ENCODE measurements at regions of chr3 and their contacts with region 1.

Region 1: DNA sequence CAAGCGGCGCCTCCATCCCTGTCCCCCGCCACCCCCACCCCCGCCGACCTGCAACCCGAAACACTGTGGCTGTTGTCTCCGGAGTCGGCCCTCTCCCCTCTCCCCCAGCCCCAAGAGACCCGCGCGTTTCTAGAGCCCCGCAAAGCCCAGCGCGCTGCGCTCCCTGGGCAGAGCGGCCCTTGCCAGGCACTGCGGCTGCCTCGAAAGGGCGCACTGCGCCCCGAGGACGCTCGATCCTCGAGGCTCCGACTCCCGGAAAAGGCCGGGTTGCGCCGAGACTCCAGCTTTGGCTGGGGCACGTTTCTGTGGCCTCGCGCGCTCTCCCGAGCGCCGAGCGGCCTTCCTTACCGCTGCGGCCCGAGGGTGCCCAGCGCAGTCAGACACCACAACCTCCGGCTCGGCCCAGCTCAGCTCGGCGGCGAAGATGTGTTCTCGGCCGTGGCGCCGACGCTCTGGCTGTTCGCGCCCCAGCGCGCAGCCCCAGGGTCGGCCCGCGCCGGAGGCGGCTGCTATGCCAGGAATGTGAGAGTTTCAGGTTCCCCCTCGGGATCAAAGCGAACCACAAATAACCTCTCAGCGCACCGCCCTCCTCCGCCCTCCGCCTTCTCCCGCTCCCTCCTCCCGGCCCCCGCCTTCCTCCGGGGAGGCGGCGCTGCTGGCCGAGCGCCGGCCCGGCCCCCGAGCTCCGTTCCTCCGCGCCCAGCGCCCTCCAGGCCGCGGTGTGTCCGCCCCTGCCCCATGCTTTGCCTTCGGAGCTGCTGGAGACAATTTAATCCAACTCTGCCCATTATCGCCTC is at the start of gene AMOTL2:
- DNase-seq: peak; percentile 93
- ATAC-seq: peak; percentile 82
- total RNA-seq, gene AMOTL2: 63.0 TPM

Region 2: DNA sequence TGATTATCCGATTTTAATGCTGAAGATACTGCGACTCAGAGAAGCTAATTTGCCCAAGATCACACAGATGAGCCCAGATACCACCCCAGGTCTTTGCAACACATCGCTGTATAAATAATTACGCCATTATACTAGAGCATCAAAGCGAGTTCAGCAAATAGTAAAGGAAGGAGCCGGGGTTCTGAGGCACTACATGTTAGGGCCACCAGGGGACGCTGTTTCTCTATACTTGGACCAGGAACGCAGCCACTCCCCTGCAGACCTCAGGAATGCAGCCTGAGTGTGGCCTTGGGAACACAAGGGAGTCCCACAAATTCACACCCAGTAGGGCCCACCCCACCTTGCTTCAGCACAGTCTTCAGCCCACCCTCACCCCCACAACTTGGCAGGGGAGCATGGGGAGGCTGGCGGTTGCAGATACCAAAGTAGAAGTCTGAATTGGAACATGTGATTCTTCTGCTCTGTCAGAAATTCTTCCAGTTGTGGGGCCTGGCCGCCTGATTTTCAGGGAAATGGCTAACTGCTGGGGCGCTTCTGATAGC is 65.8 kb before region 1 on chr3:
- intact Hi-C with region 1: loop called (anchors 2 kb)
- DNase-seq: peak; percentile 87
- ATAC-seq: peak; percentile 76

Region 3: GRCh38 chr3:134473868-134474546 is 99.8 kb after region 1 on chr3:
- intact Hi-C with region 1: loop called (anchors 5 kb)
- DNase-seq: no peak
- ATAC-seq: peak; percentile 75